HEK293 (cell line): ENCODE measurements at regions of chr10 and their contacts with region 1.

Region 1: GRCh38 chr10:103192451-103193106 is 493 bp downstream of the NT5C2 start:
- H3K4me3 ChIP-seq: peak overlapping the region; percentile 69
- H3K27ac ChIP-seq: peak overlapping the region; percentile 73
- H3K4me1 ChIP-seq: peaks cover 15% of the 10 kb centered on the region
- CTCF ChIP-seq: no peak

Region 2: GRCh38 chr10:103231047-103231551 is 38.5 kb after region 1 on chr10:
- CTCF ChIA-PET with region 1: interaction called, 3 read pairs
- POLR2A ChIA-PET with region 1: interaction called, 18 read pairs
- H3K4me3 ChIP-seq: no peak overlapping the region
- H3K27ac ChIP-seq: no peak overlapping the region
- H3K4me1 ChIP-seq: no peaks in the 10 kb centered on the region
- CTCF ChIP-seq: no peak

Region 3: GRCh38 chr10:103578782-103579382 is 386.3 kb after region 1 on chr10:
- CTCF ChIA-PET with region 1: no interaction called
- POLR2A ChIA-PET with region 1: no interaction called
- H3K4me3 ChIP-seq: no peak overlapping the region
- H3K27ac ChIP-seq: no peak overlapping the region
- H3K4me1 ChIP-seq: peaks cover 3% of the 10 kb centered on the region; the same call in 1 of the 2 replicates
- CTCF ChIP-seq: no peak